OCI-LY7 (cell line): ENCODE measurements at regions of chr5 and their contacts with region 1.

Region 1: GRCh38 chr5:176647030-176647866 is at the start of gene TSPAN17:
- DNase-seq: peak; percentile 100
- H3K4me3 ChIP-seq: peak within 1 kb of the TSS; percentile 86
- H3K27ac ChIP-seq: peak within 1 kb of the TSS; percentile 42
- H3K4me1 ChIP-seq: peaks cover 24% of the 10 kb centered on the region
- CTCF ChIP-seq: peak; percentile 62
- total RNA-seq, gene TSPAN17: 9.3 and 10.3 TPM in 2 replicates

Region 2: DNA sequence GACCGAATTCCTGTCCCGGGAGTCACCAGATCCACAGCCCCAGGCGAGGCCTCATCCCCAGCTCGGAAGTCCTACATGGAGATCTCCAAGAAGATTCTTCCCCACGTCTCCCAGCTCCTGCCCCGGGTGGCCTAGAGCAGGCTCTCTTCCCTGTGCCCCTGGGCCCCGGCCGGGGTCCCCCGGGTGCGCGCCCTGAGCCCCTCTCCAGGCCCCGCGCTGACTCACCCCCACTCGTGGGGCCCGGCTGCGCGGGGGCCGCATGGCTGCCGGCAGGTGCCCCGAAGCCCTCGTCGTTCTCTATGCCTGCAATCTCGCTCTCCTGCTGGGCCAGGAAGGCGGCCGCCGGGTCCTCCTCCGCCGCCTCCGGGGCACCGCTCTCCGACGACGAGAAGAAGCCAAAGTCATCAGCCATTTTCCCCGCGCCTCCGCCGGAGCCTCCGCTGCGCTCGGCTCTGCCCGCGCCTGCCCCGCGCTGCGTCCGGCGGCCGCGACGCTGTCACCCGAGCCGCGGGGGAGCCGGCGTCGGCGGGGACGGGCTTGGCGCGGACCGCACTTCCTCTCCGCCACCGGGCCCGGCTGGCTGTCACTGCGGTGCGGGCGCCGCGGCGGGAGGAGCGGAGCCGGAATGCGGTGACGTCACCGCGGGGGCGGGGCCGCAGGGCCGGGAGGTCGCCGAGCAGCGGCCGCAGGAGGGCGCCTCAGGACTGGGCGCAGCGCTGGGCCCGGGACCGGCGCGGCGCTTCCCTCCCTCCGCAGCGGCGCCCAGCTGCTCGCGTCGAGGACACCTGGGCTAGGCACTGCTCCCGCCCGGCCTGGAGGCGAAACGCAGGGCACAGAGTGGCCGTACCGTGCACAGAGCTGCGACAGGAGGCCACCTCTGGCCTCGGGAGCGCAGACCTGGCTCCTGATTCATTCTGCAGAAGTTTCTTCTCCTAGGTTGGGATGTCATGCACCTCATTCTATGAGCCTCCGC is 231.0 kb before region 1 on chr5 and contains the start of gene CLTB:
- CTCF ChIA-PET with region 1: no interaction called
- POLR2A ChIA-PET with region 1: no interaction called
- intact Hi-C with region 1: loop called (anchors 2 kb)
- DNase-seq: peak; percentile 93
- H3K4me3 ChIP-seq: peak within 1 kb of the TSS; percentile 86
- H3K27ac ChIP-seq: peak within 1 kb of the TSS; percentile 2
- H3K4me1 ChIP-seq: peaks cover 21% of the 10 kb centered on the region
- CTCF ChIP-seq: peak; percentile 71
- total RNA-seq, gene CLTB: 53.4 and 69.2 TPM in 2 replicates

Region 3: DNA sequence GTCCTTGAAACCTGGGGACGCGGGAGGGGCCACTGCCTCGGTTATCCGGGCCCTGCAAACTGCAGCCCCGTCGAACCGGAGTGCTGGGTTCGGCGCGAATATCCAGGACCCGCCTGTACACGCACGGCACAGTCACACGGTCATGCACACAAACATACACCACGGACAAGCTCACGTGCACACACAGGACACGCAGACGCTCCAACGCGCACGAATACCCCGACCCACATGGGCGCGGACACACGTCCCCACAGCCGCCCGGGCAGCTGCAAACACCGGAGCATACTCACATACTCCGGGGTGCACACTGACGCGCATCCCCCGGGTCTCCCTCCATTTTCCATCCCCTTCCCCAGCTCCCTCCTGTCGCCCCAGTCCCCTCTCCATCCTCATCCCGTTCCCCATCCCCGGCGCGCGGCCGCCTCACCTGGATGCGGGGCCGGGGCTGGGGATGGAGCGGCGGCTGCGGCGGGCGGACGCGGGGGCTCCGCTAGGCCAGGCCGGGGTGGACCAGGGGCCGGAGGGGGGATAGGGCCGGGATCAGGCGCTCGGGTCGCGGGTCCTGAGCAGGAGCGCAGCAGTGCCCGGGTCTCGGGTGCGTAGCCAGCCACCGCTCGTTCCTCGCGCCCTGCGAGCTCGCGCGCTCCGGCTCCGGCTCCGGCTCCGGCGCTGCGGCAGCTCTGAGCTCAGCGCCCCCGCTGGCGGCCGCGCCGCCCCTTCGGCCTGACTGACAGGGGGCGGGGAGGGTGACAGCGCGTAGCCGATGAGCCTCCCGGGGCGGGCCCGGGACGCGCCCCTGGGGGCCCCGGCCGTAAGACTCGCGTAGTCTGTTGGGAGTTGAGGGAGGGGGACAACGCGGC is 17.2 kb before region 1 on chr5 and contains the starts of genes EIF4E1B and SNCB:
- CTCF ChIA-PET with region 1: interaction called, 10 read pairs
- POLR2A ChIA-PET with region 1: interaction called, 15 read pairs
- intact Hi-C with region 1: loop called (anchors 1 kb)
- DNase-seq: peak; percentile 84
- H3K4me3 ChIP-seq: peak within 1 kb of the TSS; percentile 72
- H3K27ac ChIP-seq: peak within 1 kb of the TSS; percentile 47
- H3K4me1 ChIP-seq: peaks cover 67% of the 10 kb centered on the region
- CTCF ChIP-seq: 0 out of 2 replicates have a peak, but pooled peaks have one; percentile 23
- total RNA-seq, gene EIF4E1B: 0.16 and 0.64 TPM in 2 replicates
- total RNA-seq, gene SNCB: 0.50 and 0.70 TPM in 2 replicates

Region 4: GRCh38 chr5:177303121-177303924 is 656.1 kb after region 1 on chr5 and contains the starts of genes PRELID1 and RAB24:
- CTCF ChIA-PET with region 1: no interaction called
- POLR2A ChIA-PET with region 1: no interaction called
- intact Hi-C with region 1: loop called (anchors 5 kb)
- DNase-seq: peak; percentile 92
- H3K4me3 ChIP-seq: peak within 1 kb of the TSS; percentile 100
- H3K27ac ChIP-seq: peak within 1 kb of the TSS; percentile 73
- H3K4me1 ChIP-seq: peaks cover 69% of the 10 kb centered on the region
- CTCF ChIP-seq: peak; percentile 60
- total RNA-seq, gene PRELID1: 217 and 249 TPM in 2 replicates
- total RNA-seq, gene RAB24: 25.8 and 43.1 TPM in 2 replicates